Testis (tissue), 5 donors: ENCODE measurements at regions of chr14 and their contacts with region 1.

Region 1: GRCh38 chr14:103104654-103105452 is 10.3 kb downstream of the EXOC3L4 start:
- DNase-seq: peak; percentile 81
- H3K4me3 ChIP-seq: no peak overlapping the region
- H3K27ac ChIP-seq: no peak overlapping the region
- H3K4me1 ChIP-seq: peaks cover 18% of the 10 kb centered on the region
- H3K27me3 ChIP-seq: no peaks in the 10 kb centered on the region
- CTCF ChIP-seq: peak; percentile 96 to 98 (median 96)
- POLR2A ChIP-seq: no peak

Region 2: DNA sequence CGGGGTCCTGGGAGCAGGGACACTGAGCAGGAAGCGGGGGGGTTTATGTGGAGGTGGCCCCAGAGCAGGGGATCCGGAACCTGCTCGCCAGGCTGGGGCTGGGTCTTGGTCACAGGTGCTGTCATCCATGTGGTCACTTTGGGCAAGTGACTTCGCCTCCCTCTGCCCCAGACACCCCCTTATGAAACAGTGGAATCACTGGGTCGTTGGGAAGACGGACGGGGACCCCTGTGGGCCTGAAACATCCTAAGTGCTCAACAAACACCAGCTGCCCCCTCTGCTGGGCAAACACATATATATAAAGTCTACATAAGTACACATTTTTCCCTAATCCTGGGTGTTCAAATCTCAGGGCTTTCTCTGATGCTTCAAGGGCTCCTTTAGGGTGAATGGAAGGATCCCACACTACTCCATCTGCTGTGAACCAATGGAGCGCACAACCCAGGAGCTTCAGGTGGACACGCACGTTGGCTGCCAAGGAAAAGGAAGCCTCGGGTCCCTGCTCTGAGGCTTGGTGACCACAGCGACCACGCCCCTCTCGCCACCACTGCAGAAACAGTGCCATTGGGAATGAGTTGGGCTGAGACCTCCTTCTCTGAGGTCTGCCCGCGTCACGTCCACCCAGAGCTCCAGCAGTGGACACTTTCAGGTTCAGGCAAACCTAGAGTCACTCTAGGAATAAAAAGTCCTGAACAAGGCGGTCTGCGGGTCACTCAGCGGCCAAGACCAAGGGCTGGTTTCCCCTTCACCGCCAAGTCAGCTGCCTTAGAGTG is 102.1 kb before region 1 on chr14:
- intact Hi-C with region 1: no loop called
- DNase-seq: no peak
- H3K4me3 ChIP-seq: no peak overlapping the region
- H3K27ac ChIP-seq: no peak overlapping the region
- H3K4me1 ChIP-seq: no peaks in the 10 kb centered on the region
- H3K27me3 ChIP-seq: no peaks in the 10 kb centered on the region
- CTCF ChIP-seq: no peak
- POLR2A ChIP-seq: no peak

Region 3: DNA sequence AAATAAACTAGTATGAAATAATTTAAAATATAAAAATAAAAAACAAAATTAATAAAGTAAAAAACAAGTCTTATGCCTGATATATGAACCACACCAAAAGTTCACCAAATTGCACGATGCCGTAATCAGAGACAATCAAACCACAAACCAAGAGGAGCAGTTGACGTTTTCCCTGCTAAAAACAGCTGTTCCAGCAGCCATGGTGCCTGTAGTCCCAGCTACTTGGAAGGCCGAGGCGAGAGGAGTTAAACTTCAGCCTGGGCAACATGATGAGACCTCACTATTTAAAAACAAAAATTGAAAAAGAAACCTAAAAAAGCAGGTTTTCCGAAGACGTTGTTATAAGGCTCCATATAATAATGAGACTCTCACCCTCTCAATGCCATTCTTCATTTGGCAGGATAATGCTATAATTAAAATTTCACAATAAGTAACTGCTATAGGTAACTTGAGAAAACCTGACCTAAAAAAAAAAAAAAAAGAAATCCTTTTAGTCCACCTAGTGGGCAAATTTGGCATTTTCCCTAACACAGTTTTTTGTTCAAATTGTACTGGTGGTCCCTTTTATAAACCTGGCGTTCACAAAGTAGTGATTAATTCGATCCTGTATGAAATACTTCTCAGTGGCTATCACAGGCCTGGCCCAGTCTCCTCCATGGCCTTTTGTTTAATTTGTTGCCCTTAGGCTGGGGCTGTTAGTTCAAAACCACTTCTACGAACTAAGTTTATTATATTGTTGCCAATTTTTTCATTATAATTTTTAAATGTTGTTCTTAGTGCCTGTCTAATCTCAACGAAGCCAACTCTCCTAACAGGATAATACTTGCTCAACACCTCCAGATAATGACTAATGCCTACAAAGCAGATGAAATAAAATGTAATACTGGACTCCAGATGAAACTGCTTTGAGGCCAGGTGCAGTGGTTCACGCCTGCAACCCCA is 80.5 kb after region 1 on chr14:
- intact Hi-C with region 1: loop called (anchors 10 kb)
- DNase-seq: no peak
- H3K4me3 ChIP-seq: no peak overlapping the region
- H3K27ac ChIP-seq: no peak overlapping the region
- H3K4me1 ChIP-seq: no peaks in the 10 kb centered on the region
- H3K27me3 ChIP-seq: no peaks in the 10 kb centered on the region
- CTCF ChIP-seq: peak; percentile 58 to 88 (median 77)
- POLR2A ChIP-seq: no peak

Region 4: DNA sequence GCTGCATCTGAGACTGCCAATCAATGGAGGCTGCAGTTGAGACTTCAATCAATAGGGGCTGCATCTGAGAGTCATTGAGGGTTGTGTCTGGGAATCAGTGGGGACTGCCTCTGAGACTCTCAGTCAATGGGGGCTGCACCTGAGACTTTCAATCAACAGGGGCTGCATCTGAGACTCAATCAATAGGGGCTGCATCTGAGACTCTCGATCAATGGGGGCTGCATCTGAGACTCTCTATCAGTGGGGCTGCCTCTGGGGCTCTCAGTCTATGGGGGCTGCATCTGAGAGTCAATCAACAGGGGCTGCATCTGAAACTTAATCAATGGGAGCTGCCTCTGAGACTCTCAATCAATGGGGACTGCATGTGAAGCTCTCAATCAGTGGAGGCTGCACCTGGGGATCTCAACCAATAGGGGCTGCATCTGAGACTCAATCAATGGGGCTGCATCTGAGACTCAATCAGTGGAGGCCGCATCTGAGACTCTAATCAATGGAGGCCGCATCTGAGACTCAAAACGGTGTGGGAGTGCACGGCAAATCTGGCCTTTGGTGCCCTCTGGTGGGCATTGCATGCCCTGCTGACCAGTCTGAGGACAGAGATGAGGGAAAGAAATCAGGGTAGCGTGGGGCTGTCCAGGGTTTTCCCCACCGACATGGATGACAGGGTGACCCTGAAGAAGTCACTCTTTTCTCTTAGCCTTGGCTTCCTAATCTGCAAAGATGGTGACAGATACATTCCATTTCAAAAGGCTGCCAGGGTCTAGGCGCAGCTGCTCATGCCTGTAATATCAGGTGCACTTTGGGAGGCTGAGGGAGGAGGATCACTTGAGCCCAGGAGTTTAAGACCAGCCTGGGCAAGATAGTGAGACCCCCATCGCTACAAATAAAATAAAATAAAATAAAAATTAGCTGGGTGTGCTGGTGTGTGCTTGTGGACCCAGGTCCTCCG is 187.8 kb after region 1 on chr14:
- intact Hi-C with region 1: loop called (anchors 10 kb)
- DNase-seq: peak; percentile 86
- H3K4me3 ChIP-seq: no peak overlapping the region
- H3K27ac ChIP-seq: no peak overlapping the region
- H3K4me1 ChIP-seq: no peaks in the 10 kb centered on the region
- H3K27me3 ChIP-seq: no peaks in the 10 kb centered on the region
- CTCF ChIP-seq: peak; percentile 83 to 89 (median 83)
- POLR2A ChIP-seq: no peak